K562 (cell line): ENCODE measurements at regions of chr16 and their contacts with region 1.

Region 1: DNA sequence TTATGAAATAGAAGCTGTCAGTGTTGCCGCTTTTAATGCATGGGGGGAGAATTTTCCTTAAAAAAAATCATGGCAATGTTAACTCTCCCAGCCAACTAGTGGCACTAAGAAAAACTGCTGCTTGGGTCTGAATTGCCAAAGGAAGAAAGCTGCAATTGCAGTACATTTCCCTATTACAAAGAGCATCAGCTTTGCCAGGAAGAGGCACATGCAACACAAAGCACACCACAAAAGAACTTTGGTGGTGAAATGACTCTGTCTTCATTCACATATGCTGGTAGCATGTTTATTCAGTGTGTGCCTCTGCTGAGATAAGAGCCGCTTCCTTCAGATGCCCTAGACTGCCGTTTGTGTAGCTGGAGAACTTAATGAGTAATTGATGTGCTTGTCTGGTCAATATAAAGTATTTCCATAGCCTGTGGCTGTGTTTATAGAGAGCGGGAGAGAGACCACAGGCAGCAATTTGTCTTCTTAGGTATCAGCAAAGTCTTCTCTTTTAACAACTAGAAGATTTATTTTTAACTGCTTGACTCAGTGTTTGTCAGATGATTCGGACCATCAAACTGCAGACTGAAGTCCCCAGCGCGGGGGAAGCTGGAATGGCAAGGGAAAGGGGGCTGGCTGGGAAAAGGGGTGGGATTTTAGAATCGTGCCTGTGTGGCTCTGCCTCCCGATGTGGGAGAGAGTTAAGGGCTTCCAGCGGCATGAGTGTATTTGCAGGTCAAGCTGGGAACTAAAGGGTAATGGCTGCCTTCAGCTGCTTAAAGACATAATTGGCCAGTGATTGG is 115.1 kb downstream of the MRTFB start:
- DNase-seq: peak in 1 of 4 experiments; percentile 18
- ATAC-seq: peak; percentile 57
- H3K4me3 ChIP-seq: no peak overlapping the region
- H3K27ac ChIP-seq: no peak overlapping the region
- H3K4me1 ChIP-seq: peaks cover 0 to 9% of the 10 kb centered on the region in 2 experiments; a peak in 1 of 5 replicates
- H3K27me3 ChIP-seq: no peaks in the 10 kb centered on the region
- CTCF ChIP-seq: peak in 2 of 3 experiments; percentile 40 to 41; a peak in 3 of 6 replicates
- EP300 ChIP-seq: no peak
- POLR2A ChIP-seq: no peak
- RAD21 ChIP-seq: peak in 1 of 2 experiments; percentile 29; a peak in 2 of 4 replicates

Region 2: DNA sequence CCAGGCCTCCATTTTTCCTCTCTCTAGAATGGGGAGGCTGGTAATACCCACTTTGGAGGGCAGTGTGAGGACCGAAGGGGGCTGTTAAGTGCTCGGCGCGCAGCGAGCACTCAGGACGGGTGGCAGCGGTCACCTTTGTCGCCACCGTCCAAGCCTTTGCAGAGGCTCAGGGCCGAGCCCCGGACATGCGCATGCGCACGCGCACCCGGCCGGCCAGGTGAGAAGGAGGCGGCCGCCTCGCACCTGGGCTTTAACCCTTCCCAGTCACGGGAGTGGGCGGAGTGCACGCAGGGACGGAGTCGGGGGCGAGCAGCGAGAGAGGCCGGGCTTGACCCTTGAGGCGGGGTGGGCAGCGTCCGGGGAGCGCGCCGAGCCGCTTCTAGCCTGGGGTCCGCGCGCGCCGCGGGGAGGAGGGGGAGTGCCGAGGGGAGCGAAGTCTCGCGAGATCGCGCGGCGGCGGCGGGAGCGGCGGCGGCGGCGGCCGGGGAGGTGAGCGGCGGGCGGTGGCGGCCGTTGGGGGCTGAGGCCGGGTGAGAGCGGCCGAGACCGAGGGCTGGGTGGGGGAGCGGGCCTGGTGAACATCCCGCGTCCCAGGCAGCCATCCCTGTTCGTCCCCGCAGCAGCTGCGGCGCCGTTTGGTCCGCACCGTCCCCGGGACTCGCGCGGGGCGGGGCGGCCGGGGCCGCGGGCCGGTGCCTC is 115.2 kb before region 1 on chr16 and contains the start of gene MRTFB:
- CTCF ChIA-PET with region 1: no interaction called
- POLR2A ChIA-PET with region 1: no interaction called
- in situ Hi-C with region 1: no loop called
- intact Hi-C with region 1: loop called (anchors 10 kb)
- DNase-seq: peak; percentile 86 to 94 (median 91)
- ATAC-seq: peak; percentile 93
- H3K4me3 ChIP-seq: peak within 1 kb of the TSS; percentile 85
- H3K27ac ChIP-seq: peak within 1 kb of the TSS; percentile 78
- H3K4me1 ChIP-seq: peaks cover 7 to 12% of the 10 kb centered on the region in 2 experiments; a peak in 4 of 5 replicates
- H3K27me3 ChIP-seq: no peaks in the 10 kb centered on the region
- CTCF ChIP-seq: no peak; a peak in 1 of 6 replicates
- EP300 ChIP-seq: no peak
- POLR2A ChIP-seq: peak; percentile 78
- RAD21 ChIP-seq: no peak
- polyA plus RNA-seq, gene MRTFB: 2.2 to 2.3 TPM

Region 3: DNA sequence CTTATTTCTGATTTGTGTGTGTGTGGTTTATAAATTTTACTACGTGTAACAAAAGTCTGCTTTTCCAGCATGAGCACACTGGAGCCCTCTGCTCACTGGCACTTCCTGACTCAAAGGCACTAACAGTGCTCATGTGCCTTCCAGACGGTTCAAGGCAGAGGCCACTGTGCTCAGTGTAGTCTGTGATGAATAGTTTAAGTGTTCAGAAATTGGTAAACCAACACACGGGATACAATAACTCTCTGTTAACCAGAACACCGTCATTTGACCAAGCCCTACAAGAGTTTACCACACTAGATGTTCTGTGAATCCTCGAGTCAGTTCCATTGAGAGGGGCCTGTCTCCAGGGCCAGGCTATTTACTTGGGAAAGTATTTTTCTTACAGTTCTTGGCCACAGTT is 76.8 kb after region 1 on chr16:
- CTCF ChIA-PET with region 1: no interaction called
- POLR2A ChIA-PET with region 1: no interaction called
- in situ Hi-C with region 1: no loop called
- intact Hi-C with region 1: no loop called
- DNase-seq: no peak
- ATAC-seq: no peak
- H3K4me3 ChIP-seq: no peak overlapping the region
- H3K27ac ChIP-seq: no peak overlapping the region
- H3K4me1 ChIP-seq: no peaks in the 10 kb centered on the region
- H3K27me3 ChIP-seq: no peaks in the 10 kb centered on the region
- CTCF ChIP-seq: no peak
- EP300 ChIP-seq: no peak
- POLR2A ChIP-seq: no peak
- RAD21 ChIP-seq: no peak